ENCODE measurements at regions of chr3 and their contacts with region 1.

Region 1: DNA sequence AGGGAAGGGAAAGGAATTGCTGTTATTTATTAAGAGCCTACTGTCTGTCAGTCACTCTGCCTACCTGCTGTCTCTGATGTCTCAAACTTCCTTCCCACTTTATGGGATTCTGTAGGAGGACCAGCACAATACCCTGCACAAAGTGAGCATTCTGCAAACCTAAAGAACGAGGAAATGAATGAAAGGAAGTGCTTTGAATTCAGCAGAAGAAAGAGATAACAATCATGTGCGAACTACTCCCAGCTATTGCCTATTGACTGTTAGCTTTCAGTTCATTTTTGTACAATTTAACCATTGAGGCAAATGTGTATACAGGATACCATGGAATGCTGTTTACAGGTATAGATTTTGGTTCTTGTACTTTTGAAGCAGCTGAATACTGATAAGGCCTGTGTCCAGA is 66.8 kb downstream of the CMSS1 start:
- DNase-seq: no peak
- H3K4me3 Mint-ChIP-seq: no peak overlapping the region
- H3K27ac Mint-ChIP-seq: peak overlapping the region; percentile 67
- H3K4me1 Mint-ChIP-seq: peaks cover 27% of the 10 kb centered on the region
- H3K27me3 Mint-ChIP-seq: no peaks in the 10 kb centered on the region

Region 2: GRCh38 chr3:99869621-99870020 is 14.9 kb before region 1 on chr3:
- CTCF ChIA-PET with region 1: no interaction called
- POLR2A ChIA-PET with region 1: interaction called, 11 read pairs
- DNase-seq: no peak
- H3K4me3 Mint-ChIP-seq: no peak overlapping the region
- H3K27ac Mint-ChIP-seq: no peak overlapping the region
- H3K4me1 Mint-ChIP-seq: peaks cover 66% of the 10 kb centered on the region
- H3K27me3 Mint-ChIP-seq: peaks cover 4% of the 10 kb centered on the region